Activated CD4-positive, alpha-beta T cell treated with anti-CD3 and anti-CD28 coated beads, Interleukin-2, amount 10 ng/mL, durations not matched to agents 7 days and 5 days (primary cell): ENCODE measurements at regions of chr6 and their contacts with region 1.

Region 1: DNA sequence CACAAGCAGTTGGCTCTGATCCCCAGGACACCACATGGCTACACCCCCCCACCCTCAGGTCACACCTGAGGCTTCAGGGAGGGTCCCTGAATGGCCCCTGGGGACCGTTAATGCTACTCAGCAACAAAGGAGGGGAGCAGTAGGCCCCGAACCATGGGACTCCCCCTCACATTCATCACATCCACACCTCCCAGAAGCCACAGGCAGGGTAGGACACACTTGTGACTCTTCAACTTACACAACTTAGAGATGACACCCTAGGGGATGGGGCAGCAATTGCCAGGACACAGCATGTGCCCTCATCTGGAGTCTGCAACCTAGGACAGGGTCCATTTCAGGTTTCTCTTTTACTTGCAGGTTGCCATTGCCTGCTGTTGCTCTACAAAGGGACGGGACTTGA is 821 bp downstream of the ULBP3 start:
- DNase-seq: peak; percentile 17
- H3K4me3 Mint-ChIP-seq: peak overlapping the region; percentile 81
- H3K27ac Mint-ChIP-seq: no peak overlapping the region
- H3K4me1 Mint-ChIP-seq: peaks cover 24% of the 10 kb centered on the region
- H3K27me3 Mint-ChIP-seq: peaks cover 22% of the 10 kb centered on the region

Region 2: GRCh38 chr6:150053450-150053849 is 14.7 kb before region 1 on chr6:
- CTCF ChIA-PET with region 1: interaction called, 11 read pairs
- POLR2A ChIA-PET with region 1: no interaction called
- DNase-seq: no peak
- H3K4me3 Mint-ChIP-seq: no peak overlapping the region
- H3K27ac Mint-ChIP-seq: no peak overlapping the region
- H3K4me1 Mint-ChIP-seq: no peaks in the 10 kb centered on the region
- H3K27me3 Mint-ChIP-seq: peaks cover 51% of the 10 kb centered on the region

Region 3: GRCh38 chr6:150079604-150080003 is 11.5 kb after region 1 on chr6:
- CTCF ChIA-PET with region 1: interaction called, 10 read pairs
- POLR2A ChIA-PET with region 1: no interaction called
- DNase-seq: peak; percentile 49
- H3K4me3 Mint-ChIP-seq: peak overlapping the region; percentile 11
- H3K27ac Mint-ChIP-seq: peak overlapping the region; percentile 1
- H3K4me1 Mint-ChIP-seq: peaks cover 32% of the 10 kb centered on the region
- H3K27me3 Mint-ChIP-seq: peaks cover 33% of the 10 kb centered on the region

Region 4: DNA sequence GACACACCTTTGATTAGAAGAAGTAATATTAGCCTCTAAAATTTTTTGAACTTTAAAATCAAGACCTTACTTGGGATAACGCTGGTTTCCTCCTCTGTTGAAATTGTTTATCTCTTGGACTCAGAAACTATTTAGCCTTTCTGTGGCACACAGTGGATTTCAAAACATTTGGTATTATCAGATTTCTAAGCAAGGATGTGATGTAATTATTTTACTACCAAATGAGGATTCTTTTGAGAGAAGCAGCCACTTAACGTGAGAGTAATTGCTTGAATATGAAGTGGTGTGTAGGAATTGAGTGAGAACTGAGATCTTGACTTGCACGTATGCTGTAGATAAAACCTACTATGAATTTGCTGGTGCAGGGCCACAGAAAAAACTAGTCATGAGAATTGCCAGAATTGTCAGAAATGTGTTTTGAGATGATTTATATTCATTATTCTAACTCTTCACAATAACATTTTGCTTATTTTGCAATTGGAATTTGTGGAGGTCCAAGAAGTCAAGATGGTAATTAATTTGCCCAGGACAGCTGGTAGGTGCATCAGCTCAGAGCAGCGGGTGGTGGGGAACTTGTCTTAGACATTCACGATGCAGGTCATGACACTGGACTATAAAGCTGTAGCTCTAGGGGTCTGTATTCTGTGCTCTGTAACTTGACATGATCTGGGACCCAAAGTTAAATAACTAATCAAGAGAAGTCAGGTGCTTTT is 1225.0 kb after region 1 on chr6:
- CTCF ChIA-PET with region 1: no interaction called
- POLR2A ChIA-PET with region 1: interaction called, 13 read pairs
- DNase-seq: no peak
- H3K4me3 Mint-ChIP-seq: no peak overlapping the region
- H3K27ac Mint-ChIP-seq: no peak overlapping the region
- H3K4me1 Mint-ChIP-seq: peaks cover 26% of the 10 kb centered on the region
- H3K27me3 Mint-ChIP-seq: peaks cover 53% of the 10 kb centered on the region